Aorta (tissue), 5 donors: ENCODE measurements at regions of chr1 and their contacts with region 1.

Region 1: DNA sequence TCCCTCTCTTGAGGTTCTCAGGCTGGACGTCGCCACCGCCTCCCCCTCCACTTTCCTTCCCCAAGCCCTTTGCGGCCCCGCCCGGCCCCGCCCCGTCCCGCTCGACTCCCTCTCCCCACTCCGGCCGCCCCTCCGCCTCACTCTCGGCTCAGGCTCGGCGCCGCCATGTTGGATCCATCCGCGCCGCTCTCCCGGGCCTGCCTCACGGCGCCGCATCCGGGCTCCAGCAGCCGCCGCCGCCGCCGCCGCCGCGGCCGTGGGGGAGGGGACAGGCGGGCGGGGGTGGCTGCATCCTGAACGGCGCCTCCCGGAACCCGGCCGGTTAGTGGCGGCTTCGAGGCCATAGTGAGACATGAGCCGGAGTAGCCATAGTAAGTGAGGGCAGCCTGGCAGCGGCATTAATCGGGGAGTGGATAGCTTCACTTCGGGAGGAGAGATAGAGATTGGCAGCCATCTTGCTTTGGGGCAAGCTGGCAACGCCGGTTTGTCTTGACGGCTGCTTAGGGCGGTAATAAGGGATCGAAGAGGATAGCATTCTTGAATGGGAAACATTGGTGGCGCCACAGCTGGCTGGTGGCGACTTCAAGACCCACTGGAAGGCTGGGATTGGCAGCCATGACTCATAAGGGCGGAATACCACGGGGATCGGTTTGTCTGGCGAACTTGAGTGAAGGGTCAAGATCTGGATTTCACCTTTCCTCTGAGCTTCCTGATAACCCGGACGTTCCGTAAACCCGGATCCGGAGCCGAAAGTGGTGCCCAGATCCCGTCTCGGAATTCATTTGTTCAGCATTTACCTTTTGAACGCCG is at the start of gene DEDD:
- DNase-seq: peak; percentile 96 to 97
- ATAC-seq: peak; percentile 95
- H3K4me3 ChIP-seq: peak within 1 kb of the TSS; percentile 61 to 92
- H3K27ac ChIP-seq: peak within 1 kb of the TSS; percentile 63 to 79
- H3K4me1 ChIP-seq: no peaks in the 10 kb centered on the region
- H3K27me3 ChIP-seq: no peaks in the 10 kb centered on the region
- total RNA-seq, gene DEDD: 44.7 to 46.8 TPM

Region 2: DNA sequence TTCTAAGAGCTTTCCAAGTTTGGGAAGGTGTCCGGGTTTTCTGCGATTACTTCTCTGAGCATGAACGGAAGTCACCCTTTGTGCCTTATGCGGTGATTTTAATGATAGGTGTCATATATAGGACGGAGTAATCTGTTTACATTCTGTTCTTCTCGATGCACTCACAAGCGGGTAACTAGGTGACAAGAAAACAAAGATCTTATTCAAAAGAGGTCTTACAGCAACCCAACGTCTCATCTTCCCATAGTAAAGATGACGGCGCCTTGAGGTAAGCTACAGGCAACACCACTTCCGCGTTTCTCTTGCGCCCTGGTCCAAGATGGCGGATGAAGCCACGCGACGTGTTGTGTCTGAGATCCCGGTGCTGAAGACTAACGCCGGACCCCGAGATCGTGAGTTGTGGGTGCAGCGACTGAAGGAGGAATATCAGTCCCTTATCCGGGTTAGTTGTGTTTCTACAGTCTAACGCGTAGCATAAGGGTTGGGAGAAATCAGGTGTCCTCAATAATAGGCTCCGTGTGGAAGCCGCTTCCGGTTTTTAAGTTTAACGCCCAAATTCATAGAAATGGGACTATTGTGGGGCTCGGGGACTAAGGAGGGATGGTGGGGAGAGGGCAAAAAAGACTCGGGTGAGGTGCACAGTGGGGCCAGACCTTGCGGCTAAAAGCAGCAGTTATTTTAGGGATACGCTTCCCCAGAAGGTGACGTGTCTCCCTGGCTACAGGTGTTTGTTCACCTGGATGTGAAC is 21.2 kb after region 1 on chr1 and contains the start of gene UFC1:
- intact Hi-C with region 1: loop called (anchors 2 kb)
- DNase-seq: peak; percentile 89 to 90
- ATAC-seq: peak; percentile 95
- H3K4me3 ChIP-seq: peak within 1 kb of the TSS; percentile 70 to 76
- H3K27ac ChIP-seq: peak within 1 kb of the TSS; percentile 57 to 86
- H3K4me1 ChIP-seq: peaks cover 0 to 1% of the 10 kb centered on the region in 2 donors
- H3K27me3 ChIP-seq: no peaks in the 10 kb centered on the region
- total RNA-seq, gene UFC1: 64.2 to 70.3 TPM

Region 3: GRCh38 chr1:161159087-161159912 is 26.7 kb after region 1 on chr1 and contains the start of gene USP21:
- intact Hi-C with region 1: loop called in 1 of 2 experiments (anchors 2 kb)
- DNase-seq: peak; percentile 96 to 98
- ATAC-seq: peak; percentile 97
- H3K4me3 ChIP-seq: peak within 1 kb of the TSS; percentile 23 to 61
- H3K27ac ChIP-seq: peak within 1 kb of the TSS in 1 of 2 donors; percentile 82
- H3K4me1 ChIP-seq: peaks cover 0 to 1% of the 10 kb centered on the region in 2 donors
- H3K27me3 ChIP-seq: no peaks in the 10 kb centered on the region
- total RNA-seq, gene USP21: 16.4 to 28.1 TPM

Region 4: DNA sequence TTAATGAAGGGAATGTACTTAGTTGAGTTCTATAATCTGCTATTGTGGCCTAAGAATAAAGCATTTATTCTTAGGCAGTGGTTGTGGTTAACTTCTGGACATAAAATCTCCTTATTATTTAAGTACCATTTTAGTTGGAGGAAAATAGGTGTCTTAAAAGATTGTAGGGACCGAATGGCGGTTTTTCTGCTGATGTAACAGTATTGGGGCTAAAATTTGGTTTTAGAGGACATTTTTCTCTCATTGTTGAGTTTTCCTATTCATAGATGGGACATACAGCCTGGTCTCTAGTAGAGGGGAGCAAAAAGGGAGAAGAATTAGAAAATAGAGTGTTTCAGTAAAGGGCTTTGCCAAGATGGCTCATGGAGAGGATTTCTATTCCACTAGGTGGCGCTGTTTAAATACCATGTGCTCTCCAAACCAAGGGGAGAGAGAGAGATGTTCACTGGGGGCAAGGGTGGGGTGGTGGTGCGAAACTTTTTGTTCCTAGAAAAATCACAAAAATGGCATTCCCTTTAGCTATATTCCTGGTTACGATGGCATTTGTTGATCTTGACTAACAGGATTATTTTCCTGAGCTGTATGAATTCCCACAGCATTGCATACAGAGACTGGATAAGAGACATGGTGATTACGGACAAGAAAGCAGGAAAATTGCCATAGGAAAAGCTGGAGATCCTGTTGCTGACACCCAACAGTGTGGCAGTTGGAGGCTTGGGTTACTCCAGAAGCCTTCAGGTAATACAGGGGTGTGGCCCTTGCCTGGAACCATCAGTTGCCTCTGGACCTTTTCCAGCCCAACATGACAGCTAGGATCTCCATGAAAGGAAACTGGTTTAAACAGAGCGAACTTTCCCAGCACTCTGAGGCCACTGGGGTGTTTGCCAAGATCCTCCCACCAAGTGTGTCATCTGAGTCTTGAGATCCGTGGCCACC is 354.5 kb after region 1 on chr1:
- intact Hi-C with region 1: no loop called
- DNase-seq: peak; percentile 76 to 80
- ATAC-seq: peak; percentile 88
- H3K4me3 ChIP-seq: no peak overlapping the region
- H3K27ac ChIP-seq: no peak overlapping the region
- H3K4me1 ChIP-seq: no peaks in the 10 kb centered on the region
- H3K27me3 ChIP-seq: no peaks in the 10 kb centered on the region